ENCODE measurements at regions of chr10 and their contacts with region 1.

Region 1: GRCh38 chr10:87734987-87735827 is 75.5 kb downstream of the PAPSS2 start:
- DNase-seq: no peak
- ATAC-seq: peak in 3 of 4 donors; percentile 51 to 64 (median 62)
- H3K4me3 ChIP-seq: no peak overlapping the region
- H3K27ac ChIP-seq: no peak overlapping the region
- H3K4me1 ChIP-seq: no peaks in the 10 kb centered on the region
- H3K27me3 ChIP-seq: no peaks in the 10 kb centered on the region
- CTCF ChIP-seq: peak; percentile 68

Region 2: GRCh38 chr10:87531908-87532622 is 203.1 kb before region 1 on chr10:
- intact Hi-C with region 1: loop called in 1 of 2 experiments (anchors 10 kb)
- DNase-seq: no peak
- ATAC-seq: no peak
- H3K4me3 ChIP-seq: no peak overlapping the region
- H3K27ac ChIP-seq: no peak overlapping the region
- H3K4me1 ChIP-seq: no peaks in the 10 kb centered on the region
- H3K27me3 ChIP-seq: no peaks in the 10 kb centered on the region
- CTCF ChIP-seq: no peak

Region 3: DNA sequence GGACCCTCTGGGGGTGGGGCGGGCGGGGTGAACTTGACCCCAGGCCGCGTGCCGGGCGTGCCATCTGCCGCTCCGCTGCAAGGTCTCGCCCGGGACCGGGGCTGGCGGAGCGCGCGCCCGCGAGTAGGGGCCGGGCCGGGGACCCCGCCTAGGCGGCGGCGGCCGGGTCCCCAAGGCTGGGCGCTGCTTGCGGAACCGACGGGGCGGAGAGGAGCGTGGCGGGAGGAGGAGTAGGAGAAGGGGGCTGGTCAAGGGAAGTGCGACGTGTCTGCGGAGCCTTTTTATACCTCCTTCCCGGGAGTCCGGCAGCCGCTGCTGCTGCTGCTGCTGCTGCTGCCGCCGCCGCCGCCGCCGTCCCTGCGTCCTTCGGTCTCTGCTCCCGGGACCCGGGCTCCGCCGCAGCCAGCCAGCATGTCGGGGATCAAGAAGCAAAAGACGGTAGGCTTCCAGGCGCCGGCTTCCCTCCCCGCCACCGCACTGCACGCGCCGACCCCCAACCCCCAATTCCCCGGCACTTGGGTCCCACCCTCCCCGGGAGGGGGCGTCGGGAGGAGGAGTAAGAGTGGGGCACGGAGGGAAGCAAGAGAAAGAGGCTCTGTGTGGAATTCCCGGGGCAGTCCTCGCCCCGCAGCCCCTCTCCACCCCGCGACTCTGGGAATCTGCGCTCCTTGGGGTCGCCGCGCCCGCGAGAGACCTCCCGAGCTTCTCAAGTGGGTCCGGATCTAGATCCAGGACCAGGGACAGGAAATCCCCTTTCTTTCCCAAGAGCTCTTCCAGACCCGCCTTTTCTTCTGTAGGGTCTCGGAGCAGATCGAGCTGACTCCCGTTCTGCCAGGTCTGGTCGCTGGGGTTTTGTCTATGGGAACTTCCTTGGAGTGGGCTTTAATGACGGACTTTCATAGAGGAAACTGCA is 75.4 kb before region 1 on chr10 and contains the start of gene PAPSS2:
- intact Hi-C with region 1: loop called (anchors 2 to 10 kb)
- DNase-seq: peak; percentile 56 to 70
- ATAC-seq: peak; percentile 47 to 72 (median 58)
- H3K4me3 ChIP-seq: peak within 1 kb of the TSS; percentile 67
- H3K27ac ChIP-seq: peak within 1 kb of the TSS; percentile 34
- H3K4me1 ChIP-seq: no peaks in the 10 kb centered on the region
- H3K27me3 ChIP-seq: peaks cover 0 to 28% (median 11%) of the 10 kb centered on the region in 3 donors
- CTCF ChIP-seq: no peak
- total RNA-seq, gene PAPSS2: 3.8 to 11.0 (median 5.2) TPM